Mammary epithelial cell (primary cell): ENCODE measurements at regions of chr22 and their contacts with region 1.

Region 1: DNA sequence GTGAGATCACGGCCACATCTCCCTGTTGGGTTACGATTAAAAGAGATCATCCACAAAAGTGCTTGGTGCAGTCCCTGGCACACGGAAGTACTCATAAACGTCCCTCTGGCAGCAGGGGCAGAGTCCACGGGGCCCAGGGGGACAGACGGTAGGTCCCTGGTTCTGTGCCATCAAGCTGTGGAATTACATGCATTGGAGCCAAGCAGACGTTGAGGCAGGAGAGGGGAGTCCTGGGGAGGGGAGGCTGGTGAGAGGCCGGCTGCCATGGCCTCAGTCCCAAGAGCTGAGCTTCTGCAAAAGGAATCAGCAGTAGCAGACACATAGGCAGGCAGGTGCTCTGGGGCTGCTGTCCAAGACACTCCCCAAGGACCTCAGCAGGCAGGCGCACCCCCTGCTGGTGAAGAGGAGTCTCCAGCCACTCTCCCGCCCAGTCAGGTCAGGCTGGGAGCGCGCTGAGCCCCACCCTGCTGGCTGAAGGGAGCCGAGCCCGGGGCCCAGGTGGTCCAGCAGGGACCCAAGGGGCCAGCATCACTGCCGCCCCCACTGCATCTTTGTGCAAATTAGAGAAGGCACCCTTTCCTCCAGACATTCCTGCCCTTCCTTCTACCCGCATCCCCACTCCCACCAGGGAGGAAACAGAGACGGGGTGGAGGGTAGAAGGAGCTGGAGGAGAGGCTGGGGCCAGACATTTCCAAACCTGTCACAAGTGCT is 7.6 kb upstream of the KCTD17 start:
- DNase-seq: peak; percentile 58
- H3K4me3 ChIP-seq: no peak overlapping the region
- H3K27ac ChIP-seq: no peak overlapping the region
- H3K4me1 ChIP-seq: peaks cover 6% of the 10 kb centered on the region
- H3K27me3 ChIP-seq: no peaks in the 10 kb centered on the region
- CTCF ChIP-seq: peak; percentile 73 to 91

Region 2: GRCh38 chr22:36781656-36782627 is 262.0 kb before region 1 on chr22:
- CTCF ChIA-PET with region 1: no interaction called
- dilution Hi-C with region 1: no loop called
- in situ Hi-C with region 1: no loop called
- intact Hi-C with region 1: loop called (anchors 1 kb)
- DNase-seq: peak; percentile 77
- H3K4me3 ChIP-seq: no peak overlapping the region
- H3K27ac ChIP-seq: no peak overlapping the region
- H3K4me1 ChIP-seq: peaks cover 4% of the 10 kb centered on the region
- H3K27me3 ChIP-seq: no peaks in the 10 kb centered on the region
- CTCF ChIP-seq: peak; percentile 86 to 87

Region 3: GRCh38 chr22:36856121-36856791 is 187.7 kb before region 1 on chr22:
- CTCF ChIA-PET with region 1: no interaction called
- dilution Hi-C with region 1: no loop called
- in situ Hi-C with region 1: no loop called
- intact Hi-C with region 1: loop called (anchors 5 kb)
- DNase-seq: peak; percentile 71
- H3K4me3 ChIP-seq: no peak overlapping the region
- H3K27ac ChIP-seq: no peak overlapping the region
- H3K4me1 ChIP-seq: peaks cover 8% of the 10 kb centered on the region
- H3K27me3 ChIP-seq: no peaks in the 10 kb centered on the region
- CTCF ChIP-seq: peak; percentile 99 to 100

Region 4: DNA sequence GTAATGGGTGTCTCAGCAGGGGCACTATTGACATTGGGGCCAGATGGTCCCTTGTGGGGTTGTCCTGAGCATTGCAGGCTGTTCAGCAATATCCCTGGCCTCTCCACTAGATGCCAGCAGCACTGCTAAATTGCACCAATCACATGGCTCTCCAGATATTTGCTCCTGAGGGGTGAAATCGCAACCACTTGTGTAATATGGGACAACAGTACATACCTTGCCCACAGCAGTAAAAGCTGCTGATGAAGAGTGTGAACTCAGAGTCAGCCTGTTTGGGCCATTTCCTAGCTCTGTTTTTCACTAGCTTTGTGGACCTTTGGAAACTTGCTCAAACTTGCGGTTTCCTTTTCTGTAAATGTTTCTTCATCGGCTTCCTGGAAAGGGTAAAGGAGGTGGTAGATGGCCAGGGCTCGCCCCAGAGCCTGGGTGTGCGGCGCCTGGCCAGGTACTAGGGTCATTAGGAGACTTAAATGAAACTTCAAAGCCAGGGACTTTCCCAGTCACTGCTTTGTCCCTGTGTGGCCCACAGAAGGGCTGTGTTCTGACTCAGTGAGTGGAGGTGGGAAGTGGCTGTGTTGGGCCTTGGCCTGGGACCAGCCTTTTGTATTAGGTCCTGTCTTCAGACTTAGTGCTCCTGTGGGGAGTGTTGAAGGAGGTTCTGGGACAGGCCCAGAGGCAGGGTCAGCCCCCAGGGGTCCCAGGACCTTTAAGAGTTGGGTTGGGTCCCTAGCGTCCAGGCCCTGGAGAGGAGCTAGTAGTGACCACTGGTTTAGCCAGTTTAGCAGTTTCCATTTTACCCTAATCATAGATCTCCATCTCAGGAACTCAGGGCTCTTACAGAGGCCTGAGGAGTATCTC is 170.1 kb before region 1 on chr22:
- CTCF ChIA-PET with region 1: interaction called, 7 read pairs
- dilution Hi-C with region 1: no loop called
- in situ Hi-C with region 1: loop called in 1 of 2 experiments (anchors 10 kb)
- intact Hi-C with region 1: loop called (anchors 1 kb)
- DNase-seq: peak; percentile 88
- H3K4me3 ChIP-seq: no peak overlapping the region
- H3K27ac ChIP-seq: peak overlapping the region; percentile 64
- H3K4me1 ChIP-seq: peaks cover 42% of the 10 kb centered on the region
- H3K27me3 ChIP-seq: no peaks in the 10 kb centered on the region
- CTCF ChIP-seq: peak; percentile 63 to 72

Region 5: GRCh38 chr22:36901411-36902142 is 142.4 kb before region 1 on chr22:
- CTCF ChIA-PET with region 1: no interaction called
- dilution Hi-C with region 1: no loop called
- in situ Hi-C with region 1: no loop called
- intact Hi-C with region 1: no loop called
- DNase-seq: no peak
- H3K4me3 ChIP-seq: no peak overlapping the region
- H3K27ac ChIP-seq: no peak overlapping the region
- H3K4me1 ChIP-seq: no peaks in the 10 kb centered on the region
- H3K27me3 ChIP-seq: peaks cover 2% of the 10 kb centered on the region
- CTCF ChIP-seq: no peak

Region 6: DNA sequence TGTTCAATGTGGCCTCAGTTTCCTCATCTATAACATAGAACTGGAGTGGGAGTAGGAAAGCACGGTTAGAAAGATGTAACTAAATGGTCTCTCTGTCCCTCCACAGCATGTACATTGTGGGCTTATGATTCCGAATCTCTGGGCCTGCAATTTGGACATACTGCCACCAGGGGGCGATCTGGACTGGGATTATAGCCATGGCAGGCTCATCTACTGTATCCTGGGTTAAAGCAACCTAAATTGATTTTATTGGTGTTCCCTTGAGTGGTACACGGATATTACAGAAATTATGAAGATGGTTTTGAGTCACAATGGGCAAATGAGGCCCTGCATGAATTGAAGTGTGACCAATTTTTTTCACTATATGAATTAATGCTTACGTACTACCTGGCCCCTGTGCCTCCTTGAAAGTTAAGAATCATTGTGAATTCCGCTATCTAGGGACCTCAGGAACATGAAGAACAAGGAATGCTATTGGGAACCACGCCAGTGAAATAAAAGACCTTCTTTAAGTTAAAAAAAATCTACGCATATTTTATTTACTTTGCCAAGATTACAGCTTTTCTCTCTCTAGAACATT is 57.7 kb before region 1 on chr22:
- CTCF ChIA-PET with region 1: no interaction called
- dilution Hi-C with region 1: no loop called
- in situ Hi-C with region 1: no loop called
- intact Hi-C with region 1: loop called (anchors 1 kb)
- DNase-seq: no peak
- H3K4me3 ChIP-seq: no peak overlapping the region
- H3K27ac ChIP-seq: no peak overlapping the region
- H3K4me1 ChIP-seq: no peaks in the 10 kb centered on the region
- H3K27me3 ChIP-seq: no peaks in the 10 kb centered on the region
- CTCF ChIP-seq: peak; percentile 69 to 80

Region 7: GRCh38 chr22:37069319-37069718 is 25.3 kb after region 1 on chr22:
- CTCF ChIA-PET with region 1: no interaction called
- dilution Hi-C with region 1: no loop called
- in situ Hi-C with region 1: no loop called
- intact Hi-C with region 1: no loop called
- DNase-seq: no peak
- H3K4me3 ChIP-seq: no peak overlapping the region
- H3K27ac ChIP-seq: no peak overlapping the region
- H3K4me1 ChIP-seq: no peaks in the 10 kb centered on the region
- H3K27me3 ChIP-seq: no peaks in the 10 kb centered on the region
- CTCF ChIP-seq: no peak

Region 8: GRCh38 chr22:37098976-37099591 is 55.1 kb after region 1 on chr22:
- CTCF ChIA-PET with region 1: no interaction called
- dilution Hi-C with region 1: no loop called
- in situ Hi-C with region 1: no loop called
- intact Hi-C with region 1: no loop called
- DNase-seq: no peak
- H3K4me3 ChIP-seq: no peak overlapping the region
- H3K27ac ChIP-seq: no peak overlapping the region
- H3K4me1 ChIP-seq: no peaks in the 10 kb centered on the region
- H3K27me3 ChIP-seq: peaks cover 2% of the 10 kb centered on the region
- CTCF ChIP-seq: peak in 1 of 2 donors; percentile 13

Region 9: GRCh38 chr22:37148742-37149665 is 105.0 kb after region 1 on chr22:
- CTCF ChIA-PET with region 1: no interaction called
- dilution Hi-C with region 1: no loop called
- in situ Hi-C with region 1: no loop called
- intact Hi-C with region 1: no loop called
- DNase-seq: no peak
- H3K4me3 ChIP-seq: no peak overlapping the region
- H3K27ac ChIP-seq: no peak overlapping the region
- H3K4me1 ChIP-seq: peaks cover 7% of the 10 kb centered on the region
- H3K27me3 ChIP-seq: no peaks in the 10 kb centered on the region
- CTCF ChIP-seq: no peak